ENCODE measurements at regions of chr2 and their contacts with region 1.

Region 1: DNA sequence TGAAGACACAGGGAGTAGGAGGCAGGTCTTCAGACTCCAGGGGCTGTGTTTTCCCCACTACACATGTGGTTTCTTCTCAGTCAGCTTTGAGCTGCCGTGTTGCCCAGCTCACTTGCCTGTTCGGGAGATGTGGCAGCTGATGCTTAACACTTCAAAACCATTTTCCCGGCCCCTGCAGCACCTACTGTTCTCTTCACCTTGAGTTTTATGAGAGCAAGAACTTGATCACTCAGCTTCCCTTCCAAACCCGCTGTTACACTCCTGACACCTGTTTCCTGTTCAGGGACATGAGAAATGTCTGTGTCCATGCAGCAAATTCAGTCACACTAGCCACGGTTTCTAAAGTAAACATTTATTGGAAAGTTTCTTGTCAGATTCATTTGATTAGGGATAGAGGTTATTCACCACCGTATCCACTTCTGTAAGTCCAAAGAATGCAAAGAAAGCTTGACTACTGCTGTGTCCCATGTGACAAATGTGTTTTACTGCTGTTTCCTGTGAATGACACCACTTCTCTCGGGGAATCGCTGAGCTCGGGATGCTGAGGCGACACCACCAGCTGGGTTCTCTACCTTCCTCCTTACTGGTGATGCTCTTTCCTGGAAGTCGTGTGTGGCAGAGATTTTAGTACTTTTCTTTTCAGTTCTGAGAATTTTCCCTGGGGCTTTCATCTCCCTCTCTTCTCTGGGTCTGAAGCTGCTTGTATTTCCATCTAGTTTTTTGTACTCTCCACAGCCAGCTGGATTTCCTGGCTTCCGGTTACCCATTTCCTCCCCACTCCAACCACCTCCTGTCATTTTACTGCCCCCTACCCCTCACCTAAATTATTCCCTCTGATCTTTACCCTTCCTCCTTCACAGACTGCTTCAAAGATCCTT is 91.7 kb downstream of the KLF7 start:
- DNase-seq: peak; percentile 69
- H3K4me3 Mint-ChIP-seq: peak overlapping the region; percentile 41
- H3K27ac Mint-ChIP-seq: peak overlapping the region; percentile 85
- H3K4me1 Mint-ChIP-seq: peaks cover 27% of the 10 kb centered on the region
- H3K27me3 Mint-ChIP-seq: peaks cover 2% of the 10 kb centered on the region

Region 2: DNA sequence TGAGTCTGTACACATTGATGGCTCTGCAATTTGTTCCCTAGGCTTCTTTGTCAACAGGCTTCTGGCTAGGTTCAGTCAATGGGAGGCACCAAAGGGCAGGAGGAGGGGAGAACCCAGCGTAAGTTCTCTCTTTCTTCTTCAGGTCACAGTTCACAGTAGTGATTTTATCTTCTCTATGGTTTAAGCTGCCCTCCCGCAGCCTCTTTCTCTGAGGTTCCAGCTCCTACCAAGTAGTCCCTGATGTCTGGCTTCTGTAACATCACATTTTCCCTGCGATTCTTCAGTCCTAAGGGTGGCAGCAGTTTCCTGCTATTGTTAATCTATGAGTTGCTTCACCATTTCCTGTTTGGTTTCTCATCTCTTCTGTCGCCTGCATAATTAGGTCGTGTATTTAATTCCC is 27.3 kb before region 1 on chr2:
- CTCF ChIA-PET with region 1: interaction called, 6 read pairs
- POLR2A ChIA-PET with region 1: no interaction called
- intact Hi-C with region 1: loop called (anchors 1 kb)
- DNase-seq: peak; percentile 41
- H3K4me3 Mint-ChIP-seq: no peak overlapping the region
- H3K27ac Mint-ChIP-seq: peak overlapping the region; percentile 1
- H3K4me1 Mint-ChIP-seq: peaks cover 12% of the 10 kb centered on the region
- H3K27me3 Mint-ChIP-seq: no peaks in the 10 kb centered on the region

Region 3: GRCh38 chr2:207097278-207097677 is 23.2 kb after region 1 on chr2:
- CTCF ChIA-PET with region 1: no interaction called
- POLR2A ChIA-PET with region 1: no interaction called
- intact Hi-C with region 1: no loop called
- DNase-seq: no peak
- H3K4me3 Mint-ChIP-seq: no peak overlapping the region
- H3K27ac Mint-ChIP-seq: no peak overlapping the region
- H3K4me1 Mint-ChIP-seq: peaks cover 17% of the 10 kb centered on the region
- H3K27me3 Mint-ChIP-seq: no peaks in the 10 kb centered on the region

Measured in activated CD4-positive, alpha-beta memory T cell treated with anti-CD3 and anti-CD28 coated beads for 36 hours (primary cell).